ENCODE measurements at regions of chr15 and their contacts with region 1.

Region 1: GRCh38 chr15:64989416-64990167 is at the start of gene SPG21:
- DNase-seq: peak; percentile 85
- ATAC-seq: peak; percentile 97
- H3K4me3 Mint-ChIP-seq: peak within 1 kb of the TSS; percentile 95
- H3K27ac Mint-ChIP-seq: peak within 1 kb of the TSS; percentile 95
- H3K4me1 Mint-ChIP-seq: peaks cover 19% of the 10 kb centered on the region
- H3K27me3 Mint-ChIP-seq: no peaks in the 10 kb centered on the region; the same call in 1 of the 2 replicates
- CTCF ChIP-seq: no peak
- total RNA-seq, gene SPG21: 69.9 to 84.0 TPM (median 79.9 TPM) in 3 replicates

Region 2: DNA sequence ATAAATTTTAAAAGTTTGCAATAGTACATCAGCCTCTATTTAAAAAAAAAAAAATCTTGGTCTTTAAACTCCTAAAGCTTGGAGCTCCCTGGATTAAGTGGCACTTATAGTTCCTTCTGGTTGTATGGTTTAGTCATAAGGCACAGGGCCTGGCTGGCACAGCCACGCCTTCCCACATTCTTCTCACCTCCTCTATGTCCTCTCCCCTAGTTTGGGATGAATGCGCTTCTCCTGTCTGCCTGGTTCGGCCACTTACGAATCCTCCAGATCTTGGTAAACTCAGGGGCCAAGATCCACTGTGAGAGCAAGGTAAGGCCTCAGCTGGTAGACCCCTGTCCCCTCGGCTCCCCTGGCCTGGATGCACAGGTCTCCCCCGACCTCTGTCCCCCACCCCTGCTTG is 67.9 kb before region 1 on chr15:
- CTCF ChIA-PET with region 1: no interaction called
- POLR2A ChIA-PET with region 1: no interaction called
- DNase-seq: no peak
- ATAC-seq: no peak
- H3K4me3 Mint-ChIP-seq: no peak overlapping the region
- H3K27ac Mint-ChIP-seq: peak overlapping the region; percentile 37; the same call in 1 of the 2 replicates
- H3K4me1 Mint-ChIP-seq: peaks cover 11% of the 10 kb centered on the region
- H3K27me3 Mint-ChIP-seq: no peaks in the 10 kb centered on the region
- CTCF ChIP-seq: no peak

Region 3: GRCh38 chr15:64979252-64979710 is 10.3 kb before region 1 on chr15:
- CTCF ChIA-PET with region 1: interaction called, 12 read pairs
- POLR2A ChIA-PET with region 1: no interaction called
- DNase-seq: no peak
- ATAC-seq: peak; percentile 90
- H3K4me3 Mint-ChIP-seq: peak overlapping the region; percentile 20; the same call in 1 of the 2 replicates
- H3K27ac Mint-ChIP-seq: peak overlapping the region; percentile 95
- H3K4me1 Mint-ChIP-seq: peaks cover 28% of the 10 kb centered on the region
- H3K27me3 Mint-ChIP-seq: no peaks in the 10 kb centered on the region
- CTCF ChIP-seq: no peak